T-cell (primary cell): ENCODE measurements at regions of chr1 and their contacts with region 1.

Region 1: GRCh38 chr1:28736450-28737306 is at the start of gene YTHDF2:
- DNase-seq: peak; percentile 96 to 99 (median 97)
- ATAC-seq: peak; percentile 94 to 95 (median 95)
- H3K4me3 ChIP-seq: peak within 1 kb of the TSS; percentile 69 to 92
- H3K4me3 Mint-ChIP-seq: peak within 1 kb of the TSS; percentile 93 to 98 (median 96)
- H3K27ac ChIP-seq: peak within 1 kb of the TSS; percentile 88
- H3K27ac Mint-ChIP-seq: peak within 1 kb of the TSS; percentile 92 to 94
- H3K4me1 ChIP-seq: peaks cover 19 to 32% of the 10 kb centered on the region in 2 experiments
- H3K4me1 Mint-ChIP-seq: peaks cover 32 to 39% (median 38%) of the 10 kb centered on the region in 3 donors
- H3K27me3 ChIP-seq: no peaks in the 10 kb centered on the region
- H3K27me3 Mint-ChIP-seq: no peaks in the 10 kb centered on the region
- total RNA-seq, gene YTHDF2: 61.3 to 77.3 (median 67.0) TPM

Region 2: GRCh38 chr1:28581536-28582247 is 155.0 kb before region 1 on chr1:
- CTCF ChIA-PET with region 1: interaction called in 1 of 2 experiments, 18 read pairs
- POLR2A ChIA-PET with region 1: interaction called in 1 of 2 experiments, 6 read pairs
- DNase-seq: peak; percentile 74 to 95 (median 84)
- ATAC-seq: peak; percentile 87 to 92 (median 90)
- H3K4me3 ChIP-seq: peak overlapping the region; percentile 91 to 95
- H3K4me3 Mint-ChIP-seq: peak overlapping the region; percentile 89 to 97 (median 92)
- H3K27ac ChIP-seq: peak overlapping the region; percentile 70
- H3K27ac Mint-ChIP-seq: peak overlapping the region; percentile 92 to 93
- H3K4me1 ChIP-seq: peaks cover 11 to 39% of the 10 kb centered on the region in 2 experiments
- H3K4me1 Mint-ChIP-seq: peaks cover 36 to 52% (median 38%) of the 10 kb centered on the region in 3 donors
- H3K27me3 ChIP-seq: no peaks in the 10 kb centered on the region
- H3K27me3 Mint-ChIP-seq: no peaks in the 10 kb centered on the region

Region 3: GRCh38 chr1:28648474-28649198 is 88.0 kb before region 1 on chr1 and contains the start of gene RNU11:
- CTCF ChIA-PET with region 1: interaction called in 1 of 2 experiments, 92 read pairs
- POLR2A ChIA-PET with region 1: interaction called, 4 to 5 read pairs
- DNase-seq: peak; percentile 65 to 95 (median 86)
- ATAC-seq: peak; percentile 74 to 79 (median 77)
- H3K4me3 ChIP-seq: peak within 1 kb of the TSS; percentile 56 to 66
- H3K4me3 Mint-ChIP-seq: peak within 1 kb of the TSS; percentile 69 to 89 (median 71)
- H3K27ac ChIP-seq: peak within 1 kb of the TSS; percentile 100
- H3K27ac Mint-ChIP-seq: peak within 1 kb of the TSS; percentile 100
- H3K4me1 ChIP-seq: peaks cover 17 to 31% of the 10 kb centered on the region in 2 experiments
- H3K4me1 Mint-ChIP-seq: peaks cover 25 to 32% (median 31%) of the 10 kb centered on the region in 3 donors
- H3K27me3 ChIP-seq: no peaks in the 10 kb centered on the region
- H3K27me3 Mint-ChIP-seq: no peaks in the 10 kb centered on the region
- total RNA-seq, gene RNU11: not detected

Region 4: GRCh38 chr1:28751315-28752060 is 14.8 kb after region 1 on chr1:
- CTCF ChIA-PET with region 1: interaction called in 1 of 2 experiments, 15 read pairs
- POLR2A ChIA-PET with region 1: interaction called, 4 to 12 read pairs
- DNase-seq: no peak
- ATAC-seq: no peak
- H3K4me3 ChIP-seq: no peak overlapping the region
- H3K4me3 Mint-ChIP-seq: peak overlapping the region in 1 of 3 donors; percentile 72
- H3K27ac ChIP-seq: no peak overlapping the region
- H3K27ac Mint-ChIP-seq: peak overlapping the region; percentile 15 to 39
- H3K4me1 ChIP-seq: peaks cover 27 to 71% of the 10 kb centered on the region in 2 experiments
- H3K4me1 Mint-ChIP-seq: peaks cover 53 to 70% (median 58%) of the 10 kb centered on the region in 3 donors
- H3K27me3 ChIP-seq: no peaks in the 10 kb centered on the region
- H3K27me3 Mint-ChIP-seq: no peaks in the 10 kb centered on the region

Region 5: DNA sequence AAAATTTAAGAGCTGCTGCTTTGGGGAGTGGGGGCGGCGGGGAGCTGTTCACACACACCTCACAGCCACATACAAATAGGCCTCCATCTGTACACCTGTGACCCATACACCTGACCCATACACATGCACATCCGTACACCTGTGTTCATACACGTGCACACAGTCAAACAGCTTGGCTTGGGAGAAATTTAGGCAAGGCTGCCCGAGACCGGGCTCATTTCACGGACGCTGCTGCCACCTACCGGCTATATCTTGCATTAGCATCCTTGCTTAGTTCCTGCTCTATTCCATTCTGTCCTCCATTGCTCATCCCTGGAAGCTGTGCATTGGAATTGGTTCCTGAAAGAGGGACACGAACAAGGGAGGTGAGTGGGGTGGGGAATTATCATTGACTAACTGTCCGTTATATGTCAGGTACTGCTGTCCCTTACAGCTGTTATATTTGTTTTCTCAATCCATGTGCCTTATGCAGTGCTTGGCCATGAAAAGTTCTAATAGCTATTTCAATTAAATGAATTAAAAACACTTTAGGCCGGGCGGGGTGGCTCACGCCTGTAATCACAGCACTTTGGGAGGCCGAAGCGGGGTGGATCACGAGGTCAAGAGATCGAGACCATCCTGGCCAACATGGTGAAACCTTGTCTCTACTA is 140.6 kb after region 1 on chr1:
- CTCF ChIA-PET with region 1: interaction called in 1 of 2 experiments, 11 read pairs
- POLR2A ChIA-PET with region 1: interaction called in 1 of 2 experiments, 6 read pairs
- DNase-seq: peak; percentile 29 to 89 (median 69)
- ATAC-seq: peak; percentile 77 to 83 (median 80)
- H3K4me3 ChIP-seq: no peak overlapping the region
- H3K4me3 Mint-ChIP-seq: no peak overlapping the region
- H3K27ac ChIP-seq: no peak overlapping the region
- H3K27ac Mint-ChIP-seq: no peak overlapping the region
- H3K4me1 ChIP-seq: peaks cover 2 to 11% of the 10 kb centered on the region in 2 experiments
- H3K4me1 Mint-ChIP-seq: peaks cover 6 to 8% (median 8%) of the 10 kb centered on the region in 3 donors
- H3K27me3 ChIP-seq: peaks cover 0 to 16% of the 10 kb centered on the region in 2 experiments
- H3K27me3 Mint-ChIP-seq: peaks cover 4 to 9% of the 10 kb centered on the region in 2 donors